GM10248 (cell line): ENCODE measurements at regions of chr5 and their contacts with region 1.

Region 1: DNA sequence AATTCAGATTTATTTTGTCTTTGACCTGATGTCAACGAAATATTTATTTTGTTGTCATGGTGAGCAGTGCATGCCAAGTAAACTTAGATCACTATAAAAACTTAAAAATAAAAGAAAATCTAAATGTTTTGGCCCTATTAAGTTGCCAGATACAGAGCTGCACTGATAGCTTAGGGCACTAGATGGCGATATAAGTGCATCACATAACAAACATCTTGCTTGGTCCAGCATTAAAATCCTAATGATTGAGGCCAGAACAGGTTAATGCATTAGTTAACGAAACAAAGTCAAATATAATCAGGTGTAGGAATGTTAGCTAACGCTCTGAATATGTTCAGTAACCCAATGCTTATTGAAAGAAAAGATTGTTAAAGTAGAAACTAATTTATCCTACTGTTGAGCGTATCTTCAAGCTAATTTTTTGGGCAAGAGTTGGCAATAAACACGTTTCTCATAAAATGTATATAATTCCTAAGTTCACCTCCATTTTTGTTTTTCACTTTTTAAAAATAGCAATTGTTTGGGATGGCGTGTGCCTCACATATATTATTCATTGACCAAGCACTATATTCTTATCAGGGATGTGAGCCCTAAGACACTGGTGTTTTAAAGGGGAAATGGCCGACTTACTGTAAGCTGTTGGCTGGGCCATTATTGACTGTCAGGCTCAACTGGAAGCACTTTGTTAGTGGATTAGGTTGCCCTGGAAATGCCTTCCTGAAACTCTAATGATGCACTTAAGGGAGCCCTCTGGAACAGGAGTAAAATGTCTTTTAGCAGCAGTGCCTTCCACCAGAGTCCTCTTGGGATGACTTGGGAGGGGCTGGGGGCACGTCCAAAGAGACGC is 33.3 kb downstream of the KCTD16 start:
- DNase-seq: peak; percentile 33
- CTCF ChIP-seq: peak; percentile 78

Region 2: GRCh38 chr5:144191998-144192397 is 12.0 kb before region 1 on chr5:
- CTCF ChIA-PET with region 1: interaction called, 81 read pairs
- POLR2A ChIA-PET with region 1: no interaction called
- DNase-seq: peak; percentile 75
- CTCF ChIP-seq: peak; percentile 65

Region 3: GRCh38 chr5:145237843-145238242 is 1033.9 kb after region 1 on chr5:
- CTCF ChIA-PET with region 1: interaction called, 29 read pairs
- POLR2A ChIA-PET with region 1: no interaction called
- DNase-seq: peak; percentile 10
- CTCF ChIP-seq: peak; percentile 55

Region 4: GRCh38 chr5:145347026-145347616 is 1143.1 kb after region 1 on chr5:
- CTCF ChIA-PET with region 1: interaction called, 10 read pairs
- POLR2A ChIA-PET with region 1: no interaction called
- DNase-seq: peak; percentile 7
- CTCF ChIP-seq: peak; percentile 34